ENCODE measurements at regions of chr17 and their contacts with region 1.

Region 1: DNA sequence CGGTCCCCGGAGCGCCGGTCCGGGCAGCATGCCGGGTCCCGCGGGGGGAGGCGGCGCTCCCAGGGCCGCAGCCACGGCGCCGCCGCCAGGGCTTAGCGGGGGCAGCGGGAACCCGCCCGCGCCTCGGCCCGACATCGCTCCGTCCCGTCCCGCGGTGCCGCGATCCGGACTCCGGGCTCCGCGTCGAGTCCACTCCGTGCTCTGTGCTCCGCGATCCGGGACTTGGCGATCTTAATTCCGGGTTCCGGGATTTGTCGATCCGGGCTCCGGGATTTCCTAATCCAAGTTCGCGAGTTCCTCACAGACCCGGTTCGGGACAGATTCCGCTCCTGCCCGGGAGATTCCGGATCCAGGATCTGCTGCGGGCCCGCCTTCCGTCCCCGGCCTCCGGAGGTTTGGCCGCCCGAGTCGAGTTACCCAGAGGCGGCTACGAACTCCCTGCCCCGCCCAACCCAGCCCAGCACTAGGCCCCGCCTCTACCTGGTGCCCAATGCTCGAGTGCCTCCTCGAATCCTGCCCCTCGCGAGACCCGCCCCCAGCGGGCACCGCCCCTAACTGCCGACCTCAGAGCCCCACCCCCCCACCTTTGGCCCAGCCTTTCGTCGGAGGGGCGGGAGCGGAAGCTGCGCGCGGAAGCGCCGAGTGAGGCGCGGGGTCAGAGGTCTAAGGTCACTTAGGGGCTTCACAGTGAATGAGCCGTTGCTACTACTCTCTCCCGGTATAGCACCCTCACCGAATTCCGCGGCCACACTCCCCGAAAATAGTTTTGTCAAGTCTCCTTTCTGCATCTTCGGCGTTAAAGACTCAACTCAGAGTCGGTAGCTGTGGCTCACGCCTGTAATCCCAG is at the start of gene SMARCD2:
- DNase-seq: peak; percentile 94 to 99 (median 98)
- H3K4me3 ChIP-seq: peak within 1 kb of the TSS; percentile 57 to 98 (median 92)
- H3K4me3 Mint-ChIP-seq: peak within 1 kb of the TSS; percentile 98
- H3K27ac ChIP-seq: peak within 1 kb of the TSS; percentile 84 to 85
- H3K27ac Mint-ChIP-seq: peak within 1 kb of the TSS; percentile 92 to 98 (median 96)
- H3K4me1 ChIP-seq: peaks cover 46 to 51% of the 10 kb centered on the region in 2 donors
- H3K4me1 Mint-ChIP-seq: peaks cover 46% of the 10 kb centered on the region
- H3K27me3 ChIP-seq: no peaks in the 10 kb centered on the region
- H3K27me3 Mint-ChIP-seq: peaks cover 0 to 3% (median 1%) of the 10 kb centered on the region in 3 donors
- CTCF ChIP-seq: no peak
- polyA plus RNA-seq, gene SMARCD2: 60.2 to 77.9 (median 64.0) TPM

Region 2: DNA sequence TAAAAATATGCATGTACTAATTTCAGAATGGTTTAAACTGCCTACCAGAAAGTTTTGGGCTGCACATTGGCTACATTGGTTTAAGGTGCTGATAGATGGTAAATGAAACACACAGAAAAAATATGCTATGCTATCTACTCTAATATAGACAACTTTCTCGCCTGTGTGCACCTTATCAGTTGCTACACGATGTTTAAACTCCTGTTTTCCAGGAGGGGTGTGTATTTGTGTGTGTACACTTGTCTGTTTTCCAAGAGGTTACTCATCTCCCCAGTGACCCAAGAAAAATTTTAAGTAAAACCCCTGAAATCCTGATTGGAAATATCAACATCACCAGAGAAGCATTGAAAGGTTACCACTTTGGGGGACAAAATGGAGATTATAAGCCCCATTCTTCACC is 37.2 kb before region 1 on chr17:
- intact Hi-C with region 1: no loop called
- DNase-seq: no peak
- H3K4me3 ChIP-seq: no peak overlapping the region
- H3K4me3 Mint-ChIP-seq: no peak overlapping the region
- H3K27ac ChIP-seq: no peak overlapping the region
- H3K27ac Mint-ChIP-seq: no peak overlapping the region
- H3K4me1 ChIP-seq: no peaks in the 10 kb centered on the region
- H3K4me1 Mint-ChIP-seq: no peaks in the 10 kb centered on the region
- H3K27me3 ChIP-seq: no peaks in the 10 kb centered on the region
- H3K27me3 Mint-ChIP-seq: no peaks in the 10 kb centered on the region
- CTCF ChIP-seq: no peak

Region 3: DNA sequence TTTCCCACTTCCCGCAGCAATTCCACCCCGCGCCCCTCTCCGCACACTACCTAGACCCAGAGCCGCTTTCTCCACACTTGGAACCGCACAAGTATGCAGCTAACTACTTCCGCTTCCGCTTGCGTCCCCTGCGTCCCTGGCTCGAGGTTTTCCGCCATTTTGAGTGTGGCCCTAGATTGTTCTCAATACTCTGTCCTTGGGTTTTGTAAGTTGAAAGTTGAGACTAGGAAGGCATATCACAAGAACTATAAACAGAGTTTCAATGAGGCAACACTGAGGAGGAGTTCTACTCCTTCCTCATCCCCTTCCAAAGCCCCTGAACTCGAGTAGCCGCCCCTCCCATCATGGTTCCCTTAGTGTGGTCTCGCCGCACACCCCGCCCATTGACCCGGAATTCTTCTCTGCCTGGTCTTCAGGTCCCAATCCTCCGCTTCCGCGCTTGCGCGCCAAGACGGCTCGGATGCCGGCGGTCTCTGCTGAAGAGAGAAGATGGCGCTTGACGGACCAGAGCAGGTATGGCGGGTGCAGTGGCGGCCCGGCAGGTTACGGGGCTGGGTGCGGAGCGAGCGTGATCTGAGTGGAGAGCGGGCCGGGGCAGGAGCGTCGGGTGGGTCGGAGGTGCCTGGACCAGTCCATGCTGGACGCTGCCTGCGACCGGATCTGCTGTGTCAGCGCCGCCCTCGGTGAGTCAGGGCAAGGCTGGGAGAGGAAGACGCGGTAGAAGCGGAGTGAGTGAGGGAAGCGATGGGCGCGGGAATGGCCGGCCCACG is 15.6 kb before region 1 on chr17 and contains the starts of genes FTSJ3 and PSMC5:
- intact Hi-C with region 1: loop called (anchors 2 kb)
- DNase-seq: peak; percentile 91 to 95 (median 93)
- H3K4me3 ChIP-seq: peak within 1 kb of the TSS; percentile 80 to 94 (median 84)
- H3K4me3 Mint-ChIP-seq: peak within 1 kb of the TSS; percentile 99 to 100
- H3K27ac ChIP-seq: peak within 1 kb of the TSS; percentile 76 to 95
- H3K27ac Mint-ChIP-seq: peak within 1 kb of the TSS; percentile 97 to 100 (median 100)
- H3K4me1 ChIP-seq: peaks cover 18 to 22% of the 10 kb centered on the region in 2 donors
- H3K4me1 Mint-ChIP-seq: peaks cover 34% of the 10 kb centered on the region
- H3K27me3 ChIP-seq: no peaks in the 10 kb centered on the region
- H3K27me3 Mint-ChIP-seq: peaks cover 0 to 2% (median 0%) of the 10 kb centered on the region in 3 donors
- CTCF ChIP-seq: peak; percentile 27
- polyA plus RNA-seq, gene FTSJ3: 9.2 to 23.7 (median 15.0) TPM
- polyA plus RNA-seq, gene PSMC5: 82.8 to 97.2 (median 88.3) TPM

Region 4: GRCh38 chr17:63881876-63882601 is 39.3 kb after region 1 on chr17 and contains the start of gene GH2:
- intact Hi-C with region 1: no loop called
- DNase-seq: peak; percentile 36 to 49 (median 45)
- H3K4me3 ChIP-seq: no peak within 1 kb of the TSS
- H3K4me3 Mint-ChIP-seq: no peak within 1 kb of the TSS
- H3K27ac ChIP-seq: no peak within 1 kb of the TSS
- H3K27ac Mint-ChIP-seq: no peak within 1 kb of the TSS
- H3K4me1 ChIP-seq: no peaks in the 10 kb centered on the region
- H3K4me1 Mint-ChIP-seq: no peaks in the 10 kb centered on the region
- H3K27me3 ChIP-seq: no peaks in the 10 kb centered on the region
- H3K27me3 Mint-ChIP-seq: peaks cover 8 to 17% (median 14%) of the 10 kb centered on the region in 3 donors
- CTCF ChIP-seq: peak; percentile 55
- polyA plus RNA-seq, gene GH2: not detected